BJ (cell line): ENCODE measurements at regions of chr12 and their contacts with region 1.

Region 1: DNA sequence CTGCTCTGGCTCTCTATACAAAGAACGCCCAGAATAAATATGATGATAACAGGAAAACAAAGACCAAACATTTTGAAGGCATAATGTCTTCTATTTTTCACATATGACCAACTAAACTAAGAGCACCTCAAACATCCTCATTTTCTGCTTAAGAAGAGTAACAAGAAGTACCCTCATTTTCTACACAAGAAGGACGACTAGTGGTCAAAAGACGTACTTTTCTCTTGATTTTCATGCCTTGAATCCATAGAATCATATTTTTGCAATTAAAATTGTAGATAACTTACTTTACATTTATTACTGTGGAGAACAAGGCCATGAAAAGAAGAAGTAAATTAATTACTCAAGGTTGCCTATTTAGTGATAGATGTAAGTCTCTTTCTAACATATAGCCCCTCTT is 358.6 kb downstream of the DUSP6 start:
- DNase-seq: peak; percentile 31
- H3K4me3 ChIP-seq: no peak overlapping the region
- H3K27me3 ChIP-seq: no peaks in the 10 kb centered on the region
- CTCF ChIP-seq: peak; percentile 56

Region 2: DNA sequence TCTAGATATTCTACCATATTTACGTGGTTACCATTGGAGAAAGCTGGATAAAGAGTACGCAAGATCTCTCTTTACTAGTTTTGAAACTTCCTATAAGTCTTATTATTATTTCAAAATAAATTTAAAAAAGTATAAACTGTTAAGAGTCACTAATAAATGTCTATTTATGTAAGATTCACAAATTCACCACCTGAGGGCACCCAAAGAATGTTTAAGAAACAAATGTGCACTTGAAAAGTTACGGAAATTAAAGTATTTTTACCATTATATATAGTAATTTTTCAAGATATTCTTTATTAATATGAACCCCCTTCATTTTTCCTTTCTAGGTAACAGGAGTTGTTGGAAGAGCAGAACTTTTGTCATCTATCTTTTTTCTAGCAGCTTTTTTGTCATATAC is 839.7 kb before region 1 on chr12:
- CTCF ChIA-PET with region 1: interaction called, 15 read pairs
- POLR2A ChIA-PET with region 1: no interaction called
- DNase-seq: no peak
- H3K4me3 ChIP-seq: no peak overlapping the region
- H3K27me3 ChIP-seq: no peaks in the 10 kb centered on the region
- CTCF ChIP-seq: peak; percentile 25; the same call in 1 of the 2 replicates

Region 3: DNA sequence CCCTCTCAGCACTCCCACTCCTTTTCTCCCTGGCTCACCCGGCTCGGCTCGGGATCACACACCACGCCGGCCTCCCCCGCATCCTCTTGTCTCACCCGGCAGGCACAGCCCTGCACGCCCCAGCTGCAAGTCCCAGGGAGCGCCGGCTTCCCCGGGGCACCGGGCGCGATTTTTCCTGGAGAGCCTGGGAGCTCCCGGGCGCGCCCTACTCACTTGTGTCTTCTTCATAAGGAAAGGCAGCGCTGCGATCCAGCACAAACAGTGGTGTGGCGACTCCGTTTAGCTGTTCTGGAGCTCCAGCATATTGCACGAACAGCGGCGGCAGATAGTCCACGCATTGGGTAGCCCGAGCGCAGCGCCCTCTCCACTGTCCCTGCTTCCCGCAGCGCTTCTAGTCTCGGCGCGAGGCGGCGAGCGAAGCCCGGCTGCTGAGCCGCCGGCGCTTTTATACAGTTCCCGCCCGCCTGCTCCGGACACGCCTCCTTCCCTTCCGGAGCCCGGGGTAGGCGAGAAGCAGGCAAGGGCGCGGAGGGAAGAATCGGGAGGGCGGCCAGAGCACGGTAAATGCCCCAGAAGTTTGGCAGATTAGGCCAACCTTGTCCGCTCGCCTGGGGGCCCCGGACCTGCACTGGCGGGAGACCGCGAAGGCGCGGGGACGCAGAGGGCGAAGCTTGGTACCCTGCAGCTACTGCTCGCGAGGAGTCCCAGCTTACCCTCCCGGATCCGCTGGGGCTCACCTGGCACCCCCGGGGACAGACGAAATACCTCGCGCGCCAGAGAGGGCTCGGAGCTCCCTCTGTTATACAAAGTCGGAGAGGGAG is 413.4 kb before region 1 on chr12 and contains the start of gene KITLG:
- CTCF ChIA-PET with region 1: interaction called, 22 read pairs
- POLR2A ChIA-PET with region 1: interaction called, 3 read pairs
- DNase-seq: no peak
- H3K4me3 ChIP-seq: peak within 1 kb of the TSS; percentile 73
- H3K27me3 ChIP-seq: no peaks in the 10 kb centered on the region
- CTCF ChIP-seq: peak; percentile 64
- polyA plus RNA-seq, gene KITLG: 17.0 and 43.0 TPM in 2 replicates

Region 4: DNA sequence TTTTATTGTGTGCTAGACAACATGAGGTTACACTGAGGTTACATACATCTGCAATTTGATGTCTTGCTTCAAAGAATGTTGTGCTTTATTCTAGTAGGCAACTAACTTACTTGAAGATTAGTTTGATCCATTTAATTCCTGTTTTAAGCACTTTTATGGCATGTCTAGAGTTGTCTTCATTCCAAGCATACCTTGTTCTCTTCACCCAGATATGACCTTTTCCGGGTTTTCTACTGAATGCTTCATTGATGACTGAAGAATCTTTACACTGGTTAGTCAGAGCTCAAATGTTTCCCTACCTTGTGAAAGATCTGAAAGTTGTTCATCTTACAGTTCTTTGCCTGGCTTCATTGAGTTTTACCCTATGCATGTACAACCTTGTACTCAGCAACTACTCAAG is 139.4 kb before region 1 on chr12:
- CTCF ChIA-PET with region 1: interaction called, 10 read pairs
- POLR2A ChIA-PET with region 1: no interaction called
- DNase-seq: peak; percentile 73
- H3K4me3 ChIP-seq: no peak overlapping the region
- H3K27me3 ChIP-seq: no peaks in the 10 kb centered on the region
- CTCF ChIP-seq: no peak

Region 5: GRCh38 chr12:88969127-88969526 is 24.5 kb before region 1 on chr12:
- CTCF ChIA-PET with region 1: no interaction called
- POLR2A ChIA-PET with region 1: no interaction called
- DNase-seq: no peak
- H3K4me3 ChIP-seq: no peak overlapping the region
- H3K27me3 ChIP-seq: no peaks in the 10 kb centered on the region
- CTCF ChIP-seq: no peak